CD4-positive, alpha-beta memory T cell (primary cell): ENCODE measurements at regions of chr11 and their contacts with region 1.

Region 1: GRCh38 chr11:45771566-45772448 is 33.1 kb upstream of the SLC35C1 start:
- DNase-seq: peak; percentile 68 to 81 (median 72)
- H3K4me3 ChIP-seq: peak overlapping the region; percentile 69 to 92
- H3K4me3 Mint-ChIP-seq: peak overlapping the region; percentile 90 to 95 (median 92)
- H3K27ac ChIP-seq: peak overlapping the region; percentile 64
- H3K27ac Mint-ChIP-seq: peak overlapping the region; percentile 81 to 92 (median 90)
- H3K4me1 ChIP-seq: peaks cover 22% of the 10 kb centered on the region
- H3K4me1 Mint-ChIP-seq: peaks cover 9 to 28% (median 22%) of the 10 kb centered on the region in 4 donors
- H3K27me3 ChIP-seq: no peaks in the 10 kb centered on the region
- H3K27me3 Mint-ChIP-seq: peaks cover 0 to 3% of the 10 kb centered on the region in 2 donors

Region 2: DNA sequence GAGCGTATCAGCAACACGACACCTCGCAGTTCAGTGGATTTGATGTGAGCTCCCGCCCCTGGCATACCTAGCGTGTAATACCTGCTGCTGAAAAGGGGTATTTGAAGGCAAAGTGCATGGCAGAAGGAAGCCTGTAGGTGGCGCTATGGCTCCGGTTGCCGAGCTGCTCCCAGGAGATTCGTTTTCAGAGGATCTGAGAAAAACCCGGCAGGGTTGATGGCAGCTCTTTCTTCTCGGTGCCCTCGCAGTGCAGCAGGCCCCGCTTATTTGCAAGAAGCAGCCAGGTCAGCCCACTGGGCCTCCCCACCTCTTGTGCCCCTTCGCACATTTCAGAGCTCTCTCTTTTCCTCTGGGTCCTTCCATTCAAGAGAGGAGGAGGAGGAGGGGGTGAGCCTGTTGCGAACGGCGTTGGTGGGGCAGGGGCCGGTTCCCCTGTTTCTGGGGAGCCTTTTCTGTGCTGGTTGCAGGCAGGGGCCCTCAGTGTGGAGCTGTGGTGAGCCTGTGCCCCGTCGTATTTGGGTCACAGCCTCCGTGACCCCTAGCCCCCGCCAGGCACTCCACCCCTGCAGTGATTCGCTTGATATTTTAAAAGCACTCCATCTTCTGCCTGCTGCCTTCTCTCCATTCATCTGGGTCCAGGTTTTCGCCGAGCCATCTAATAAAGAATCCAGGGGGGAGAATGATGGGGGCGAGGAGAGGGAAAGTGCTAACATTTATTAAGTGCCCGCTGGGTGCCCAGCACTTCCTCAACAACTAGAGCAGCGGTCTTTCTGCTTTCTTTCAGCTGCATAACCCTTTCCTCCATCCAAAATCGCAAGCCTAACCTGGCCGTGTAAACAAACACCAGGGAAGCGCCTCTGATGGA is 400.3 kb before region 1 on chr11:
- CTCF ChIA-PET with region 1: interaction called, 15 read pairs
- POLR2A ChIA-PET with region 1: interaction called, 5 read pairs
- intact Hi-C with region 1: no loop called
- DNase-seq: peak; percentile 57 to 69 (median 65)
- H3K4me3 ChIP-seq: no peak overlapping the region
- H3K4me3 Mint-ChIP-seq: peak overlapping the region in 3 of 8 donors; percentile 12 to 52 (median 36)
- H3K27ac ChIP-seq: no peak overlapping the region
- H3K27ac Mint-ChIP-seq: peak overlapping the region in 4 of 7 donors; percentile 68 to 78 (median 72)
- H3K4me1 ChIP-seq: peaks cover 35% of the 10 kb centered on the region
- H3K4me1 Mint-ChIP-seq: peaks cover 20 to 52% (median 26%) of the 10 kb centered on the region in 4 donors
- H3K27me3 ChIP-seq: no peaks in the 10 kb centered on the region
- H3K27me3 Mint-ChIP-seq: peaks cover 8 to 11% of the 10 kb centered on the region in 2 donors

Region 3: DNA sequence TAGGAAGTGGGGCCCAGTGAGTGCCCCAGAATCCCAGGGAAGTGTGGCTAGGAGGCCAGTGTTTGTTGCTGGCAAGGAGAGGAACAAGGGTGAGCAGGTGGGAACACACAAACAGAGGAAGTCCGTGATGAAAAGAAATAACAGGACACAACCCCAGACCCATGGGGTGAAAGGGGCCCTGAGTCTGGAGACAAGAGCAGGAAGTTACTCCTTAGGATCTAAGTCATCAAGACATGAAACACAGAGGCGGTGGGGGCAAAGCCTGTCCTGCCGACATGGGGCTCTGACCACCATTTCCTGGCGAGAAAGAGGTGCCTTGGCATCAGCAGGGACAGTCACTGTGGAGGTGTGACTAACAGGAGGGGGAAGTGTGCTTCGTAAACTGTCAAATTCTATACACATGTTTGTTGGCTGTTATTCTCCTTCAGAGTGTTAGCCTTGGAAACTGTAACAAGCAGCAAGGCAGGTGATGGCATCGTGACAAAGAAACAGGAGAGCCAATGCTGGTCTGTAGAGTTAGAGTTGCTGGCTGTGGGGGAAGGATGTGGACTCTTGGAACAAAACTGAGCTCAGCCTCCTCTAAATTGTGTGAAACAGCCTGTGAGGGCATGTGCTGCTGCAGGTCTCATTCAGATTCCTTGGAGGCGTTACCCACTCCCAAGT is 128.1 kb before region 1 on chr11:
- CTCF ChIA-PET with region 1: no interaction called
- POLR2A ChIA-PET with region 1: no interaction called
- intact Hi-C with region 1: no loop called
- DNase-seq: no peak
- H3K4me3 ChIP-seq: no peak overlapping the region
- H3K4me3 Mint-ChIP-seq: no peak overlapping the region
- H3K27ac ChIP-seq: no peak overlapping the region
- H3K27ac Mint-ChIP-seq: no peak overlapping the region
- H3K4me1 ChIP-seq: no peaks in the 10 kb centered on the region
- H3K4me1 Mint-ChIP-seq: peaks cover 0 to 3% (median under 1%) of the 10 kb centered on the region in 4 donors
- H3K27me3 ChIP-seq: no peaks in the 10 kb centered on the region
- H3K27me3 Mint-ChIP-seq: peaks cover 10 to 17% of the 10 kb centered on the region in 2 donors

Region 4: DNA sequence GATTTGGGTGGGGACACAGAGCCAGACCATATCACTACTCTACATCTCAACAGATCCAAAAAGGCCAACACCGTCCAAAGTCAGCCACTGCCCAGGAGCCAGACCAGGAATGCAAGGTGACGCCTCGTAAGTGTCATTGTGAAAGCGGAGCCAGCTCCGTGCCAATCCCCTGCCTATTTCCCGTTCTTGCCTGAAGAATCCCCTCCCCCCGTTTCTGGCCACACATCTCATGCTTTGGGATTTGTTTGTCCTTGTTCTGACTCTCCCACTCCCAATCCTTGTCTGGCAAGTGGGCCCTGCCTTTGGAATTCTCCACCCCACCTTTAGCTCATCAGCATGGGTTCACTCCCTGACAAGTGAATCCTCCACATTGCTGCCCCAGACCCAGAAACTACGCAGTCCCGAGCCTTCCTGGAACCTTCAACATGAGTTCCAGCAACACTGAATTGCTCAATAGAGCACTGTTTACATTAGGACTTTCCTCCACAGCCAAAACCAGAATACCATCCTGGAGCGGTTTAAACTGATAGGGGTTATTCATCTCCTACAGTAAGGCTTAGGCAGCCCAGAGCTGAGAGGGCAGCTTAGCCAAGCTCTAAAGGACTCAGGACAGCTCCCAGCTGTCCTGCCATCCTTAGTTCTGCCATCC is 27.1 kb after region 1 on chr11:
- CTCF ChIA-PET with region 1: interaction called, 33 read pairs
- POLR2A ChIA-PET with region 1: interaction called, 28 read pairs
- intact Hi-C with region 1: no loop called
- DNase-seq: no peak
- H3K4me3 ChIP-seq: no peak overlapping the region
- H3K4me3 Mint-ChIP-seq: no peak overlapping the region
- H3K27ac ChIP-seq: no peak overlapping the region
- H3K27ac Mint-ChIP-seq: no peak overlapping the region
- H3K4me1 ChIP-seq: peaks cover 3% of the 10 kb centered on the region
- H3K4me1 Mint-ChIP-seq: peaks cover 0 to 11% (median 4%) of the 10 kb centered on the region in 4 donors
- H3K27me3 ChIP-seq: no peaks in the 10 kb centered on the region
- H3K27me3 Mint-ChIP-seq: peaks cover 0 to 3% of the 10 kb centered on the region in 2 donors

Region 5: GRCh38 chr11:45812581-45813548 is 41.1 kb after region 1 on chr11:
- CTCF ChIA-PET with region 1: interaction called, 12 read pairs
- POLR2A ChIA-PET with region 1: no interaction called
- intact Hi-C with region 1: no loop called
- DNase-seq: no peak
- H3K4me3 ChIP-seq: no peak overlapping the region
- H3K4me3 Mint-ChIP-seq: no peak overlapping the region
- H3K27ac ChIP-seq: no peak overlapping the region
- H3K27ac Mint-ChIP-seq: peak overlapping the region in 6 of 7 donors; percentile 18 to 76 (median 52)
- H3K4me1 ChIP-seq: peaks cover 23% of the 10 kb centered on the region
- H3K4me1 Mint-ChIP-seq: peaks cover 16 to 36% (median 27%) of the 10 kb centered on the region in 4 donors
- H3K27me3 ChIP-seq: no peaks in the 10 kb centered on the region
- H3K27me3 Mint-ChIP-seq: no peaks in the 10 kb centered on the region

Region 6: DNA sequence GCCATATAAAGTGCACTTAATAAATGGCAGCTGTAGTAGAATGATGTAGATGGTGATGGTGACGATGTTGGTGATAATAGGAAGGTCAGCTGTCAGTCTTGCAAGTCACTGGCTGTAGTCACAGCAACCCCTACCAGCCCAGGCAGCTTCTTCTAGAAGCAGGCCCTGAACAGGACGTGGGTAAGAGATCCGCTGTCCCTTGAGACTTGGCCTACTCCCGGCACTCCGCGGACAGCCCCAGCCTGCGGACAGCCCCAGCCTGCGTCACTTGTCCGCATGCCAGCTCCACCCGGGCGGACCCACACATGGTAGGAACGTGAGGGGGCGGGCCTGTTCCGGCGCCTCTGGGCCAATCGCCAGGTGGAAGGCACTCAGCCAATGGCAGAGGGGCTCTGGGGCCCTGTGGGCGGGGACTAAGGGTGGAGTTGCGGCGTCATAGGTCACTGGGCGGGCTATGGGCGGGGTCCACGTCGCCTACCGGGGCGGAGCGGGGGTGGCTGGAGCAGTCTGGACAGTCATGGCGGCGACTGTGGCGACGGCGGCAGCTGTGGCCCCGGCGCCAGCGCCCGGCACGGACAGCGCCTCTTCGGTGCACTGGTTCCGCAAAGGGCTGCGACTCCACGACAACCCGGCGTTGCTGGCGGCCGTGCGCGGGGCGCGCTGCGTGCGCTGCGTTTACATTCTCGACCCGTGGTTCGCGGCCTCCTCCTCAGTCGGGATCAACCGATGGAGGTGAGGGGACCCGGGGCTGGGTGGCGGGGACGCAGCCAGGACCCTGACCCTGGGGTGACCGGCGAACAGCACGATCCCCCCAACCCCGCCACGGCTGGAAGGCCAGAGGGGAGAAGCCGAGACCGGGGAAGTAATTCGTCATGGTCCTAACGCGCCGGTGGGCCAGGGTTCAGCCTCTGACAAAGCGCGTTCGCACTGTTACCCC is 75.4 kb after region 1 on chr11 and contains the start of gene CRY2:
- CTCF ChIA-PET with region 1: interaction called, 9 read pairs
- POLR2A ChIA-PET with region 1: interaction called, 9 read pairs
- intact Hi-C with region 1: loop called (anchors 1 kb)
- DNase-seq: peak; percentile 98
- H3K4me3 ChIP-seq: peak within 1 kb of the TSS; percentile 80 to 86
- H3K4me3 Mint-ChIP-seq: peak within 1 kb of the TSS; percentile 81 to 97 (median 87)
- H3K27ac ChIP-seq: peak within 1 kb of the TSS; percentile 96
- H3K27ac Mint-ChIP-seq: peak within 1 kb of the TSS; percentile 96 to 100 (median 97)
- H3K4me1 ChIP-seq: peaks cover 43% of the 10 kb centered on the region
- H3K4me1 Mint-ChIP-seq: peaks cover 27 to 68% (median 50%) of the 10 kb centered on the region in 4 donors
- H3K27me3 ChIP-seq: no peaks in the 10 kb centered on the region
- H3K27me3 Mint-ChIP-seq: no peaks in the 10 kb centered on the region
- total RNA-seq, gene CRY2: 66.0 to 67.4 TPM

Region 7: DNA sequence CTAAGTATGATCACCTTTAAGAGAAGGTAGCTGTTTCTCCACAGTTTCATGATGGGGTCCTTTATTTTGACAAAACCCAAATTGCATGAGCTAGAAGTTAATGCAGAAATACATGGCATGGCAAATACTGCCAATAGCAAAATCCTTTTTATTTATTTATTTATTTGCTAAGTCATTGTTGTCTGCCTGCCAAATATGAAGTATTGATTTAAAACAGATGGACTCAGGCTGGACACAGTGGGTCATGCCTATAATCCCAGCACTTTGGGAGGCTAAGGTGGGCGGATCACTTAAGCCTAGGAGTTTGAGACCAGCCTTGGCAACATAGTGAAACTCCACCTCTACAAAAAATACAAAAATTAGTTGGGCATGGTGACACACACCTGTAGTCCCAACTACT is 203.0 kb after region 1 on chr11:
- CTCF ChIA-PET with region 1: no interaction called
- POLR2A ChIA-PET with region 1: no interaction called
- intact Hi-C with region 1: no loop called
- DNase-seq: no peak
- H3K4me3 ChIP-seq: no peak overlapping the region
- H3K4me3 Mint-ChIP-seq: no peak overlapping the region
- H3K27ac ChIP-seq: no peak overlapping the region
- H3K27ac Mint-ChIP-seq: no peak overlapping the region
- H3K4me1 ChIP-seq: no peaks in the 10 kb centered on the region
- H3K4me1 Mint-ChIP-seq: peaks cover 0 to 5% (median under 1%) of the 10 kb centered on the region in 4 donors
- H3K27me3 ChIP-seq: no peaks in the 10 kb centered on the region
- H3K27me3 Mint-ChIP-seq: no peaks in the 10 kb centered on the region

Region 8: DNA sequence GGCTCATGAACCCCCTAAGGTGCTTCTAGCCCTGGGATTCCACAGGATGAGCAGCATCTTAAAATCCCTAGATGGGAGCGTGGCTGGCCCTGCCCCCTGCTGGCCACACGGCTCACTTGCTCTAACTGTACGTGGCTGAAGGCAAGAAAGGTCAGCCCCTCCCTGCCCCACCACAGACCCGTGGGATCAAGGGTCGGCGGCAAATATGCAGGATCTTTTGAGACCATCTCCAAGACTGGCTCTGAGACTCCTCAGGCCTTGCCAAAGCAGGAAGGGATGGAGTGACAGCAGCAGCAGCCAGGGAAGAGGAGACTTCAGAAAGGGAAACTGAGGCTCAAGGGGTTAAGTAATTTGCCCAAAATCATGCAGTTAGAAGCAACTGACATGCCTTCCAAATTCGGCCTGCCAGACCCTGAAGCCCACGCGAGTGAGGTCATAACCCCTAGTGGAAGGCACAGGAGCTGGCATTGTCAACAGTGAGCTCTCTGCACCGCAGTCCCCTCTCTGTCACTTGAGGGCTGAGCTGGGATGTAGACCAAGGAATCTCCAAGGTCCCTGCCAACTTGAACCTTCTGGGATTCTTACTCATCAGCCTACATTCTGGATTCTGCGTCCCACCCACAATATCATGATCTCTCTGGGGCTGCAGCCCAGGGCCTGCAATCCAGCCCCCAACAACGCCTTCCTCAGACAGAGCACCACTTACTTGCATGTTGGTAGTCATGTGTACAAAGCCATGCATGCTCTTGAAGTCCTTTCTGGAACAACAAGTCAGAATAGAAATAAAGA is 537.0 kb after region 1 on chr11:
- CTCF ChIA-PET with region 1: no interaction called
- POLR2A ChIA-PET with region 1: no interaction called
- intact Hi-C with region 1: loop called (anchors 2 kb)
- DNase-seq: peak; percentile 44 to 61 (median 53)
- H3K4me3 ChIP-seq: no peak overlapping the region
- H3K4me3 Mint-ChIP-seq: no peak overlapping the region
- H3K27ac ChIP-seq: no peak overlapping the region
- H3K27ac Mint-ChIP-seq: peak overlapping the region in 1 of 7 donors; percentile 69
- H3K4me1 ChIP-seq: peaks cover 6% of the 10 kb centered on the region
- H3K4me1 Mint-ChIP-seq: peaks cover 4 to 11% (median 6%) of the 10 kb centered on the region in 4 donors
- H3K27me3 ChIP-seq: no peaks in the 10 kb centered on the region
- H3K27me3 Mint-ChIP-seq: no peaks in the 10 kb centered on the region